ENCODE measurements at regions of chr16 and their contacts with region 1.

Region 1: GRCh38 chr16:31458844-31459721 is at the start of gene ARMC5:
- DNase-seq: peak; percentile 93 to 99
- ATAC-seq: peak; percentile 83 to 87
- H3K4me3 ChIP-seq: peak within 1 kb of the TSS; percentile 87
- H3K27ac ChIP-seq: peak within 1 kb of the TSS; percentile 98 to 99
- H3K4me1 ChIP-seq: peaks cover 40% of the 10 kb centered on the region
- CTCF ChIP-seq: peak; percentile 67
- EP300 ChIP-seq: no peak
- POLR2A ChIP-seq: peak; percentile 69
- RAD21 ChIP-seq: peak; percentile 6 to 32; a peak in 2 of 5 replicates
- polyA plus RNA-seq, gene ARMC5: 3.2 and 3.5 TPM in 2 replicates

Region 2: GRCh38 chr16:31117391-31118197 is 341.5 kb before region 1 on chr16 and contains the start of gene KAT8:
- CTCF ChIA-PET with region 1: no interaction called
- POLR2A ChIA-PET with region 1: interaction called, 16 read pairs
- DNase-seq: peak; percentile 96 to 98
- ATAC-seq: peak; percentile 96 to 97
- H3K4me3 ChIP-seq: peak within 1 kb of the TSS; percentile 57
- H3K27ac ChIP-seq: peak within 1 kb of the TSS; percentile 91 to 93
- H3K4me1 ChIP-seq: peaks cover 17% of the 10 kb centered on the region
- CTCF ChIP-seq: no peak
- EP300 ChIP-seq: no peak
- POLR2A ChIP-seq: peak; percentile 65
- RAD21 ChIP-seq: 0 out of 5 replicates have a peak, but pooled peaks of 1 of the 2 experiments have one; percentile 20
- polyA plus RNA-seq, gene KAT8: 42.2 and 52.9 TPM in 2 replicates

Region 3: GRCh38 chr16:31167315-31167714 is 291.8 kb before region 1 on chr16:
- CTCF ChIA-PET with region 1: no interaction called
- POLR2A ChIA-PET with region 1: no interaction called
- DNase-seq: no peak
- ATAC-seq: no peak
- H3K4me3 ChIP-seq: no peak overlapping the region
- H3K27ac ChIP-seq: no peak overlapping the region
- H3K4me1 ChIP-seq: no peaks in the 10 kb centered on the region
- CTCF ChIP-seq: no peak
- EP300 ChIP-seq: no peak
- POLR2A ChIP-seq: no peak
- RAD21 ChIP-seq: no peak

Region 4: DNA sequence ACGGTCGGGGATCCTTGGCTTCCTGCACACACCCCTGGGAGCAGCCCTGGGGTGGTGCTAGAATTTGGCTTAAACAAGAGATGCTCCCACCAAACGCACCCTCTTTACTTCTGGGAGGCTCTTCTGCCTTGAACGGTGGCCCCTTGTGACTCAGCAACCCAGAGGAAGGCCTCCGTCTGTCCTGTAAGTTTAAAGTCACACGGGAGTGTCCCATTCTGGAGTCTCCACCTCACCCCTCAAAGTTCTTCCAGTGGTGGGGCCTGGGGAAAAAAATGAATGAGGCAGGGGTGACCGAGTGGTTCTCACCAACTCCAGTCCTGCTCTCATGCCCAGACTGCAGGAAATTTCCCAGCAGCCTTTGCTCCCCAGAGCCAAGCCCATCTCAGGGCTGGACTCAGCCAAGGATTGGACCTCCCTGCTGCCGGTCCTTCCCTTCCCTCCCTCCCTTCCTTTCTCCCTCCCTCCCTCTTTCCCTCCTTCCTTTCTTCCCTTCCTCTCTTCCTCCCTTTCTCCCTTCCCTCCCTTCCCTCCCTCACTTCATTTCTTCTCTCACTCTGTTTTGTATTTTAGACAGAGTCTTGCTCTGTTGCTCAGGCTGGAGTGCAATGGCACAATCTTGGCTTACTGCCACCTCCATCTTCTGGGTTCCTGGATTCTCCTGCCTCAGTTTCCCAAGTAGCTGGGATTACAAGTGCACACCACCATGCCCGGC is 54.6 kb before region 1 on chr16:
- CTCF ChIA-PET with region 1: no interaction called
- POLR2A ChIA-PET with region 1: no interaction called
- DNase-seq: peak; percentile 81 to 97
- ATAC-seq: peak; percentile 98 to 99
- H3K4me3 ChIP-seq: peak overlapping the region; percentile 70
- H3K27ac ChIP-seq: peak overlapping the region; percentile 84 to 92
- H3K4me1 ChIP-seq: peaks cover 20% of the 10 kb centered on the region
- CTCF ChIP-seq: no peak
- EP300 ChIP-seq: no peak
- POLR2A ChIP-seq: peak; percentile 91
- RAD21 ChIP-seq: no peak

Region 5: GRCh38 chr16:31440516-31441184 is 18.4 kb before region 1 on chr16:
- CTCF ChIA-PET with region 1: interaction called, 52 read pairs
- POLR2A ChIA-PET with region 1: interaction called, 12 read pairs
- DNase-seq: no peak
- ATAC-seq: no peak
- H3K4me3 ChIP-seq: no peak overlapping the region
- H3K27ac ChIP-seq: no peak overlapping the region
- H3K4me1 ChIP-seq: no peaks in the 10 kb centered on the region
- CTCF ChIP-seq: no peak
- EP300 ChIP-seq: no peak
- POLR2A ChIP-seq: no peak
- RAD21 ChIP-seq: no peak

Region 6: GRCh38 chr16:31507929-31508705 is 49.0 kb after region 1 on chr16 and contains the start of gene RUSF1:
- CTCF ChIA-PET with region 1: interaction called, 4 read pairs
- POLR2A ChIA-PET with region 1: interaction called, 18 read pairs
- DNase-seq: peak; percentile 72 to 91
- ATAC-seq: peak; percentile 97 to 98
- H3K4me3 ChIP-seq: peak within 1 kb of the TSS; percentile 79
- H3K27ac ChIP-seq: peak within 1 kb of the TSS; percentile 91 to 95
- H3K4me1 ChIP-seq: peaks cover 14% of the 10 kb centered on the region
- CTCF ChIP-seq: no peak
- EP300 ChIP-seq: no peak
- POLR2A ChIP-seq: peak; percentile 71
- RAD21 ChIP-seq: no peak
- polyA plus RNA-seq, gene RUSF1: 27.8 and 42.4 TPM in 2 replicates

Region 7: GRCh38 chr16:31868691-31869167 is 409.6 kb after region 1 on chr16:
- CTCF ChIA-PET with region 1: interaction called, 14 read pairs
- POLR2A ChIA-PET with region 1: interaction called, 23 read pairs
- DNase-seq: peak; percentile 51 to 66
- ATAC-seq: peak; percentile 86 to 89
- H3K4me3 ChIP-seq: no peak overlapping the region
- H3K27ac ChIP-seq: no peak overlapping the region
- H3K4me1 ChIP-seq: no peaks in the 10 kb centered on the region
- CTCF ChIP-seq: peak; percentile 82
- EP300 ChIP-seq: no peak
- POLR2A ChIP-seq: no peak
- RAD21 ChIP-seq: peak; percentile 85 to 86